Dendritic cell treated with granulocyte-macrophage colony-stimulating factor and Interleukin-4, amounts not matched to agents 40 ng/mL and 50 ng/mL, for 4 days (primary cell): ENCODE measurements at regions of chr3 and their contacts with region 1.

Region 1: GRCh38 chr3:195744437-195744836 is 23.7 kb downstream of the MUC20 start:
- H3K4me3 Mint-ChIP-seq: no peak overlapping the region
- H3K27ac Mint-ChIP-seq: no peak overlapping the region
- H3K4me1 Mint-ChIP-seq: peaks cover 6% of the 10 kb centered on the region
- H3K27me3 Mint-ChIP-seq: peaks cover 26% of the 10 kb centered on the region

Region 2: GRCh38 chr3:195729476-195730251 is 14.8 kb before region 1 on chr3:
- intact Hi-C with region 1: loop called (anchors 1 kb)
- H3K4me3 Mint-ChIP-seq: no peak overlapping the region
- H3K27ac Mint-ChIP-seq: no peak overlapping the region
- H3K4me1 Mint-ChIP-seq: no peaks in the 10 kb centered on the region
- H3K27me3 Mint-ChIP-seq: no peaks in the 10 kb centered on the region